ENCODE measurements at regions of chrX and their contacts with region 1.

Region 1: DNA sequence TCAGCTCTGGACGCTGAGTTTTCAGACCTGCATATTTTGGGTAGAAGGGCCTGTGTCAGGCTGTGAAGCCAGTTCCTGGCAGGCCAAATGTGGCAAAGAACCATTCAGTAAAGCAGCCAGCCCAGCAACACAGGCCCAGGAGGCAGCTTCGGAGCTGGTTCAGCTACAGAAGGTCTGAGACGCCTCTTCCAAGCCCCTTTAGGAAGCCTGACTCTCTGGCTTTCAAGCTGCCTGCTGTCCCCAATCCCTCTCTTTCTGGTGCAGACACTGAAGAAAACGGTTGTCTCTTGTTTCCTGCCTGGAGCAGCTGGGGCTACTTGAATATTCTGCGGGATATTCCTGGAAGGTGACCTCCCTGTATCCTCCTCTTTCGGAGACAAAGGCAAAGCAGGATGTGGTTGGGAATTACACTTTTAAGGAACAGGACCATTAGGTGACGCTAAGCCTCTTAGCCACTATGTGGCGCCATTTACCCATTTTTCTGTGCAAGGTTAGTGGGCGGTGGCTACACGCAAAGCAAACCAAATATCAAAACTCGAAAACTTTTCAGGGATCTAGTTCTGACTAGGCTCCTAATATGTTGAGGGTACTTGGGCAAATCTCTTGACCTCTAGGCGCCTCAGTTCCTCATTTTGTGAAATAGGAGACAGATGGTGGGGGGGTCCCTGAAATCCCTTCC is 47.2 kb upstream of the LAS1L start:
- DNase-seq: peak; percentile 78
- H3K4me3 ChIP-seq: no peak overlapping the region
- H3K27ac ChIP-seq: no peak overlapping the region
- H3K4me1 ChIP-seq: no peaks in the 10 kb centered on the region
- H3K27me3 ChIP-seq: no peaks in the 10 kb centered on the region
- CTCF ChIP-seq: peak; percentile 86

Region 2: GRCh38 chrX:65985922-65986588 is 404.3 kb after region 1 on chrX:
- CTCF ChIA-PET with region 1: interaction called, 4 read pairs
- POLR2A ChIA-PET with region 1: no interaction called
- intact Hi-C with region 1: loop called (anchors 1 kb)
- DNase-seq: peak; percentile 85
- H3K4me3 ChIP-seq: no peak overlapping the region
- H3K27ac ChIP-seq: peak overlapping the region; percentile 49
- H3K4me1 ChIP-seq: peaks cover 4% of the 10 kb centered on the region
- H3K27me3 ChIP-seq: no peaks in the 10 kb centered on the region
- CTCF ChIP-seq: peak; percentile 62

Region 3: GRCh38 chrX:66030505-66031317 is 448.9 kb after region 1 on chrX:
- CTCF ChIA-PET with region 1: no interaction called
- POLR2A ChIA-PET with region 1: no interaction called
- intact Hi-C with region 1: loop called (anchors 5 kb)
- DNase-seq: peak; percentile 39
- H3K4me3 ChIP-seq: no peak overlapping the region
- H3K27ac ChIP-seq: no peak overlapping the region
- H3K4me1 ChIP-seq: no peaks in the 10 kb centered on the region
- H3K27me3 ChIP-seq: no peaks in the 10 kb centered on the region
- CTCF ChIP-seq: peak; percentile 74

Region 4: DNA sequence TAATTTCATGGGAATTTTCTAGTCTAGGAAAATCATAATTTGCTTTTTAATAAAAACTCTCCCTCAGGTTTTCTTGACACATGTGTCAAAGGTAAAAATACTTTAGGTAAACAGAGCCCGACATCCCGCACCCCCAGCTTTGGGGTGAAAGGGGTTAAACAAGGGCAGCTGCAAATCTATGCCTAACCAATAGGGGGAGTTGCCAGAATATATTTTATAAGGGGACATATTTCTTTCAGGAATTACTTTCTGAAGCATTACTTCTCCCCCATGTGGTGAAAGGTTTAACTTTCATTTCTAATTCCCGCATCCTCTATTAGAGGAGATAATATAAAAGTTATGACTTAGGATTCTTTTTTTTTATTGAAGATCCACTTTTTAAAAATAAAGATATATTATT is 528.3 kb after region 1 on chrX:
- CTCF ChIA-PET with region 1: no interaction called
- POLR2A ChIA-PET with region 1: no interaction called
- intact Hi-C with region 1: loop called (anchors 5 kb)
- DNase-seq: peak; percentile 42
- H3K4me3 ChIP-seq: no peak overlapping the region
- H3K27ac ChIP-seq: no peak overlapping the region
- H3K4me1 ChIP-seq: no peaks in the 10 kb centered on the region
- H3K27me3 ChIP-seq: no peaks in the 10 kb centered on the region
- CTCF ChIP-seq: peak; percentile 52